ENCODE measurements at regions of chr10 and their contacts with region 1.

Region 1: DNA sequence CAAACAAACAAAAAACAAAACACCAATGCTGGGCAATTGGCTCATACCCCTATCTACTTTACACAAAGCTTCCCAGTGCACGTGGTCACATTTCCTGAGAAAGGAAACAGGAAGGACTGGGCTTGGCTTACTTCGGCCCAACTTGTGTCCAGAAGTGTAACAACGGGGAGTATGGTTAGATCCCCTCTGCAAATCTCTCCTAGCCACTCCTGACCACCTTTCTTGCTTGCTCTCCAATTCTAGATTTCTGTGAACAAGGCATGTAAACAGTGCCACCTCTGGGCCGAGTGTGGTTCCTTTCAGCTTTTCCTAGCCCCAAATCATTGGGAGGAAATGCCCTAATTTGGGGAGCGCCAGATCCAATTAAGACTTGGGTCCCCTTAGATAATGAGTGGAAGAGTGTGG is 21.0 kb upstream of the FRAT2 start:
- DNase-seq: no peak
- ATAC-seq: peak; percentile 51
- H3K4me3 ChIP-seq: no peak overlapping the region
- H3K27ac ChIP-seq: no peak overlapping the region
- H3K4me1 ChIP-seq: no peaks in the 10 kb centered on the region
- H3K27me3 ChIP-seq: no peaks in the 10 kb centered on the region
- CTCF ChIP-seq: peak; percentile 25 to 36 (median 31); a peak in 5 of 6 replicates
- POLR2A ChIP-seq: no peak
- RAD21 ChIP-seq: peak; percentile 63; the same call in 1 of the 2 replicates

Region 2: DNA sequence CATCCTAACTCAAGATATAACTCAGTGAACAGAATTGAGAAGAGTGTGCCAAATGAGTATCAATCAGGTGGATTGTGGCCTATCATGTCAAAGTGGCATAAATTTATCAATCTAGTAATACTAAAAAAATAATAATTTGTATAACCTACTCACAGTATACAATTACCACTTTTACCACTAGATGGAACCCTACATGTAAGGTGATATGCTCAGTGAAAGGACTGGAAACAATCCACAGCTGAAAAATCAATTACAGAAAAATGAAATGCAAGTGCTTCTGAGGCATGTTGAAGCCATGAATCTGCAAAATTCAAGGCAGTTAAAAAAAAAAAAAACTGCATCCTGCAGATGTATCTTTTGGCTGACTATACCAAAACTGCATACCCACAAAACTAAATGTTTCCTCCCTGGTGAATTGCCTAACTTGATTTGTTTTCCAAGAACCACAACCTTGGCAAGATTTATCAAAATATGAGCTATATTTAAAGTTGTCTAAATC is 77.0 kb before region 1 on chr10:
- CTCF ChIA-PET with region 1: interaction called, 7 read pairs
- POLR2A ChIA-PET with region 1: no interaction called
- RAD21 ChIA-PET with region 1: no interaction called
- intact Hi-C with region 1: loop called (anchors 2 kb)
- DNase-seq: peak; percentile 33
- ATAC-seq: peak; percentile 84
- H3K4me3 ChIP-seq: no peak overlapping the region
- H3K27ac ChIP-seq: no peak overlapping the region; the same call in 1 of the 2 replicates
- H3K4me1 ChIP-seq: peaks cover 5 to 12% of the 10 kb centered on the region in 2 experiments; a peak in 2 of 4 replicates
- H3K27me3 ChIP-seq: no peaks in the 10 kb centered on the region
- CTCF ChIP-seq: peak; percentile 54 to 57 (median 56); a peak in 5 of 6 replicates
- POLR2A ChIP-seq: no peak
- RAD21 ChIP-seq: peak; percentile 71